IMR-90 (cell line): ENCODE measurements at regions of chr19 and their contacts with region 1.

Region 1: DNA sequence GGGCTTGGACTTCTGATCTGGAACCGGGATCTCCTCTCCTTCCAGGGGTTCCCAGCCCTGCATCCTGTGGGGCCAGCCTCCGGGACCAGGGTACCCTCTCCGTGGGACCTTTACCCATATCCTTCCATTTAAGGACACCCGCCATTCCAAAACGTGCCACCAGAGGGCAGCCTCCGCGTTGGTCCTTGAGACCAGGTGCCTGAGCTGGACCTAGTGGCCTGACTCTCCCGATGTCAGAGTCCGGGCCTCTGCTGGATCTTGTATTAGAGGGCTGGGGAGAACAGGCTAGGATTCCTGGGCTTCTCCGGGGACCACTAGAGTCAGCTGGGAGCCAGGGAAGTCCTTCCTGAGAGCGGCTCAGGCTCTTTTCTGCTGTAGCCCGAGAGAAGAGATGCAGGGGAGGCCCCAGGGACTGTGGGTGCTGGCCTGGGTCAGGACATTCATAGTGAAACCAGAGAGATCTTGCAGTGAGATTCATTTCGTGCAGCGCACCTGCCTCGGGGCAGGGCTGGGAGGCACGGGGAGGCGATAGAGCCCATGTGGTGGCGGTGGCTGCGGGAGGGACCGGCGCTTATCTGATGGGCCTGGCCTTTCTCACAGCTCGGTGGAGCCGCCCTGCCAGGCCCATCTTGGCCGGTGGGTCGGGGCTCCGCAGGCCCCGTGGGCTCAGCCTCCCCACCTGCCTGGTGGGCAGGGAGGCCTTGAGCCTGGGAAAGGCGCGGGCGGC is 9.8 kb upstream of the SLC7A10 start:
- DNase-seq: peak; percentile 55
- ATAC-seq: peak; percentile 91
- H3K4me3 ChIP-seq: no peak overlapping the region
- H3K27ac ChIP-seq: no peak overlapping the region
- H3K4me1 ChIP-seq: no peaks in the 10 kb centered on the region
- H3K27me3 ChIP-seq: peaks cover 22% of the 10 kb centered on the region; the same call in 1 of the 2 replicates
- CTCF ChIP-seq: peak; percentile 78
- POLR2A ChIP-seq: no peak
- RAD21 ChIP-seq: peak; percentile 84

Region 2: GRCh38 chr19:32570081-32570785 is 665.2 kb before region 1 on chr19:
- CTCF ChIA-PET with region 1: no interaction called
- POLR2A ChIA-PET with region 1: no interaction called
- dilution Hi-C with region 1: no loop called
- in situ Hi-C with region 1: no loop called
- intact Hi-C with region 1: no loop called
- DNase-seq: peak; percentile 57
- ATAC-seq: peak; percentile 95
- H3K4me3 ChIP-seq: no peak overlapping the region
- H3K27ac ChIP-seq: no peak overlapping the region
- H3K4me1 ChIP-seq: no peaks in the 10 kb centered on the region
- H3K27me3 ChIP-seq: 0 out of 2 replicates have a peak, but pooled peaks cover 2% of the 10 kb centered on the region
- CTCF ChIP-seq: peak; percentile 77
- POLR2A ChIP-seq: no peak
- RAD21 ChIP-seq: peak; percentile 84

Region 3: GRCh38 chr19:33302175-33302973 is 66.9 kb after region 1 on chr19 and contains the start of gene CEBPA:
- CTCF ChIA-PET with region 1: no interaction called
- POLR2A ChIA-PET with region 1: no interaction called
- dilution Hi-C with region 1: no loop called
- in situ Hi-C with region 1: no loop called
- intact Hi-C with region 1: loop called (anchors 5 kb)
- DNase-seq: peak; percentile 72
- ATAC-seq: peak; percentile 92
- H3K4me3 ChIP-seq: peak within 1 kb of the TSS; percentile 40
- H3K27ac ChIP-seq: no peak within 1 kb of the TSS
- H3K4me1 ChIP-seq: no peaks in the 10 kb centered on the region
- H3K27me3 ChIP-seq: peaks cover 66% of the 10 kb centered on the region
- CTCF ChIP-seq: peak; percentile 66
- POLR2A ChIP-seq: peak; percentile 57; the same call in 1 of the 2 replicates
- RAD21 ChIP-seq: peak; percentile 42
- total RNA-seq, gene CEBPA: under 0.01 TPM in 1 of 2 replicates, not detected in the other

Region 4: DNA sequence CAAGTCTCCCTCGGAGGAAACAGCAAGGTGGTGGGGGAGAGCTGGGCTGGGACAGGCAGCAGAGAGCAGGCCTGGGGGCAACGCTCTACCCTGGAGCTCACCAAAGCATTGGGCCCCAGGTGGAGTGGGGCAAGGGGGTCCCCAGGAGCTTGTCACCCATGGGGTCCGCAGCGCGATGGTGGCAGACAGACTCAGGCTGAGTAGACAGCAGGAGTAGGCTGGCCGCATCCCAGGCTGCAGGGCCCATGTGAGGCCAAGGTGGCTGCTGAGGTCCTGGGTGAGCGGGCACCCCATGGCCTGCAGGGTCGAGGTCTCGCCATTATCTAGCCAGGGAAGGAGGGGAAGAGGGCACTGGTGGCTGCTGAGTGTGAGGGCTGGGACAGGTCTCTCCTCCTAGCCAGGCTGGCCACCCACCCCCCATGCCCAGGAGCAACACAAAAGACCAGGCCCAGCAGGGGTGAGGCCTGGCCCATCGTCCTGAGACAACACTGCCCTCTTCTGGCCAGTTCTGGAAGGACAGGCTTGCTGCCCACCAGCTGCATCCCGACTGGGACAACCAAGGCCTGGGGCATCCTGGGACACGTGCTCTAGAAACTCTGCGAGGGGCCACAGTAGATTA is 171.2 kb after region 1 on chr19:
- CTCF ChIA-PET with region 1: interaction called, 3 read pairs
- POLR2A ChIA-PET with region 1: no interaction called
- dilution Hi-C with region 1: no loop called
- in situ Hi-C with region 1: loop called (anchors 5 kb)
- intact Hi-C with region 1: loop called (anchors 1 kb)
- DNase-seq: peak; percentile 39
- ATAC-seq: peak; percentile 95
- H3K4me3 ChIP-seq: no peak overlapping the region
- H3K27ac ChIP-seq: no peak overlapping the region
- H3K4me1 ChIP-seq: no peaks in the 10 kb centered on the region
- H3K27me3 ChIP-seq: no peaks in the 10 kb centered on the region
- CTCF ChIP-seq: peak; percentile 90
- POLR2A ChIP-seq: no peak
- RAD21 ChIP-seq: peak; percentile 95

Region 5: DNA sequence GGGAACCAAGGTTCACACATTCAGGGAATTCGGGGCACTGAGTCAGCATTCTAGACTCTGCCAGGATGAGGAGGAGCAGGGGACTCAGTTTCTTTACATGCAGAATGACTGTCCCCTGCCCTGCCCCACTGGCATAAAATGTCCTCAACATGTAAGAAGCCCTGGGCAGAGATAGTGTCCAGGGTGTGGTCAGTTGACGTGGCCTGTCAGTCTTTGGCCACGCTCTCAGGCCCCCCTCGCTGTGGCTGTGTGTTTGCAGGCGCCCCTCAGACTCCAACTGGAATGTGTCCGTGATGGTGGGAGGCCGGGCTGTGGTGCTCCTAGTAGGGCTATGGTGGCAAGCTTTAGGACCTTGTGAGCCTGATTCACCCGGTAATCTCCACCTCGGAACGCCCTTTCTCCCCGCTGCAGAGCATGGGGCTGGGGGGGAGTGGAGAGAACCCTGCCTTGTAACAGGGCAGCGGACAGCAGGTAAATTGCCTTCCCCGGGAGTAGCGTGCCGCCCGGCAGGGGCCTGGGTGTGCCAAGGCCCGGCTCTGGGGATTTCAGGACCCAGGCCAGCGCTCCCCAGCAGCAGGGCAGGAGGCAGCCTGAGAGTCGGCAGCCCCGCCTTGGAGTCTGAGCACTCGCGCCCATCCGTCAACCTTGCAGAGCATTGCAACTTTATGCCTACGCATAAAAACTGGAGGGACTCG is 448.6 kb after region 1 on chr19:
- CTCF ChIA-PET with region 1: no interaction called
- POLR2A ChIA-PET with region 1: no interaction called
- dilution Hi-C with region 1: no loop called
- in situ Hi-C with region 1: no loop called
- intact Hi-C with region 1: loop called (anchors 5 kb)
- DNase-seq: peak; percentile 18
- ATAC-seq: peak; percentile 96
- H3K4me3 ChIP-seq: no peak overlapping the region
- H3K27ac ChIP-seq: no peak overlapping the region
- H3K4me1 ChIP-seq: no peaks in the 10 kb centered on the region
- H3K27me3 ChIP-seq: no peaks in the 10 kb centered on the region; the same call in 1 of the 2 replicates
- CTCF ChIP-seq: no peak
- POLR2A ChIP-seq: no peak
- RAD21 ChIP-seq: no peak